ENCODE measurements at regions of chr1 and their contacts with region 1.

Region 1: GRCh38 chr1:153670859-153671627 is at the start of gene ILF2:
- DNase-seq: peak; percentile 99
- H3K4me3 Mint-ChIP-seq: no peak within 1 kb of the TSS
- H3K27ac Mint-ChIP-seq: no peak within 1 kb of the TSS
- H3K4me1 Mint-ChIP-seq: peaks cover 36% of the 10 kb centered on the region
- H3K27me3 Mint-ChIP-seq: no peaks in the 10 kb centered on the region
- total RNA-seq, gene ILF2: 346 to 357 TPM

Region 2: GRCh38 chr1:153532769-153533599 is 138.1 kb before region 1 on chr1:
- CTCF ChIA-PET with region 1: interaction called, 3 read pairs
- intact Hi-C with region 1: loop called (anchors 1 kb)
- DNase-seq: peak; percentile 90
- H3K4me3 Mint-ChIP-seq: peak overlapping the region; percentile 51
- H3K27ac Mint-ChIP-seq: peak overlapping the region; percentile 96
- H3K4me1 Mint-ChIP-seq: peaks cover 54% of the 10 kb centered on the region
- H3K27me3 Mint-ChIP-seq: no peaks in the 10 kb centered on the region

Region 3: GRCh38 chr1:153658400-153659174 is 12.5 kb before region 1 on chr1 and contains the start of gene SNAPIN:
- CTCF ChIA-PET with region 1: no interaction called
- intact Hi-C with region 1: loop called (anchors 1 kb)
- DNase-seq: peak; percentile 95
- H3K4me3 Mint-ChIP-seq: peak within 1 kb of the TSS; percentile 97
- H3K27ac Mint-ChIP-seq: peak within 1 kb of the TSS; percentile 94
- H3K4me1 Mint-ChIP-seq: peaks cover 15% of the 10 kb centered on the region
- H3K27me3 Mint-ChIP-seq: no peaks in the 10 kb centered on the region
- total RNA-seq, gene SNAPIN: 24.4 to 26.2 TPM

Region 4: GRCh38 chr1:153946622-153947241 is 275.7 kb after region 1 on chr1 and contains the start of gene DENND4B:
- CTCF ChIA-PET with region 1: no interaction called
- intact Hi-C with region 1: loop called (anchors 2 kb)
- DNase-seq: peak; percentile 71
- H3K4me3 Mint-ChIP-seq: peak within 1 kb of the TSS; percentile 92
- H3K27ac Mint-ChIP-seq: peak within 1 kb of the TSS; percentile 95
- H3K4me1 Mint-ChIP-seq: peaks cover 21% of the 10 kb centered on the region
- H3K27me3 Mint-ChIP-seq: no peaks in the 10 kb centered on the region
- total RNA-seq, gene DENND4B: 124 to 130 TPM

Region 5: DNA sequence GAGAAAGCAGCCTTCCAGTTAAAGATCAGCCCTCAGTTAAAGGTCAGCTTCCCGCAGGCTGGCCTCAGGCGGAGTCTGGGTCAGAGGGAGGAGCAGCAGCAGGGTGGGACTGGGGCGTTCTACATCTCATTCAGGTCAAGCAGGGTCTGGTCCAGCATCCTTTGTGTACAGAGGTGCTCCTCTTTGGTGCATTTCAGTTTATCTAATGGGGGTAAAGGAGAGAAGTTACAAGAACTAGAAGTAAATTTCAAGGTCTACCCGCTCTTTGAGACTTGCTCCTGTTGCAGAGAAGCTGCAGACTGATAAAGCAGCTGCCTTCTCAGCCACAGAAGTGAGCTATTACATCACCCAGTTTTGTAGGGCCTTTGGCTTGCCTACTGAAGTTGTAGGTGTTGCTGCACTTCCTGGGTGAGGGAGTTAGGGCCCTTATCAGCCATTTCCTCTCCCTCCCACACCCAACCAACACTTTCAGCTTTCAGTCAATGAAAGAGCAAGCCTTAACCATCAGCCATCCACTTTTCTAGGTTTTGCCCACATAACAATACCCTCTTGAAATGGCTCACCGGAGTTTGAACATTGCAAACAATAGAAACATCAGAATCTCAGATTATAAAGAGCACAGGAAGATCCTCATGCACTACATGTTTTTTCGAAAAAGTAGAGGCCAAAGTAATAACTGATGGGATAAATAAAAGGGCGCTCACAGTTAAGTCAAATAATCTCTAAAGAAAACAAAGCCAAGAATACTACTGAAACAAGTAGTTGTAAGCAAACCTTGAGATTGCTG is 486.7 kb after region 1 on chr1:
- CTCF ChIA-PET with region 1: interaction called, 3 read pairs
- intact Hi-C with region 1: loop called (anchors 10 kb)
- DNase-seq: peak; percentile 87
- H3K4me3 Mint-ChIP-seq: peak overlapping the region; percentile 48
- H3K27ac Mint-ChIP-seq: peak overlapping the region; percentile 96
- H3K4me1 Mint-ChIP-seq: peaks cover 70% of the 10 kb centered on the region
- H3K27me3 Mint-ChIP-seq: no peaks in the 10 kb centered on the region

Region 6: GRCh38 chr1:154272217-154272998 is 601.4 kb after region 1 on chr1 and contains the start of gene HAX1:
- CTCF ChIA-PET with region 1: no interaction called
- intact Hi-C with region 1: loop called (anchors 2 kb)
- DNase-seq: peak; percentile 99
- H3K4me3 Mint-ChIP-seq: peak within 1 kb of the TSS; percentile 98
- H3K27ac Mint-ChIP-seq: peak within 1 kb of the TSS; percentile 99
- H3K4me1 Mint-ChIP-seq: peaks cover 40% of the 10 kb centered on the region
- H3K27me3 Mint-ChIP-seq: no peaks in the 10 kb centered on the region
- total RNA-seq, gene HAX1: 204 to 219 TPM

Measured in activated naive CD4-positive, alpha-beta T cell treated with anti-CD3 and anti-CD28 coated beads for 36 hours (primary cell).